ENCODE measurements at regions of chr7 and their contacts with region 1.

Region 1: GRCh38 chr7:34165929-34166550 is 260.7 kb downstream of the BMPER start:
- DNase-seq: peak; percentile 37
- H3K4me3 ChIP-seq: no peak overlapping the region
- H3K27ac ChIP-seq: no peak overlapping the region
- H3K4me1 ChIP-seq: no peaks in the 10 kb centered on the region
- H3K27me3 ChIP-seq: peaks cover 0 to 2% of the 10 kb centered on the region in 2 experiments
- CTCF ChIP-seq: peak; percentile 37 to 59
- POLR2A ChIP-seq: no peak

Region 2: DNA sequence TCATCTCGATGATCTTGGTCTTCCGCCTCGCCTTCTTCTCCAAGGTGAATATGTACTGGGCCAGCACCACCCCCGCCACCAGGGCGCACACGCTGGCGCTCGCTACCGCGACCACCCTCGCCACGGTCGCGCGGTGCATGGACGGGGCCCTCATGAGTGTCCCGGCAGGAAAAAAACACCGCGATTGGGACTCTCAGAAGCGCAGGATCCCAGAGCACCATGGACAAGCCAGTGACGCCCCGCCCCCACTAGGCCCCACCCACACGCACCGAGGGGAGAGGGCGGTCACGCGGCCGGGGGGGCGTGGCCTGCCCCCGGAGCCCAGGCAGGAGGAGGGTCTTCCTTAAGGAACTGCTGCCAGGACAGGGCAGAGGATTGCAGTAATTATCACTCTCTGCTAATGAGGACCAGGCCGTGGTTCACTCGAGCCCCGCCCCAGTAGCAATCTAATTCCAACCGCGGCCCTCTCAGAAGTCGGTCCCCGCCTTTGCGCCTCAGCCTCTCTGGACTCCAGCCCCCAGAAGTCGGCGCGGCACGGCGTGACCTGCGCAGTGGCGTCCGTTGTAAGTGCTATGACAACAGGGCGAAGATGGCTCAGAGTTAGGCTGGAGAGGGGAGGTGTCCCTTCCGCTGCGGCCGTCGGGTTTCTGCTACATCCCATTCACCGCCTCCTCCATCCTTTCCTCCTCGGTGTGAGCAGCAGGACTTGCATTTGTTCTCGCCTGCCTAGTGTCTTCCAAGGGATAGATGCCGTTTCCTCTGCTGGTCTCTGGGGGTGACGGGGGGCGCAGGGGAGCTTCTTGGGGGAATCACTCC is 1036.8 kb before region 1 on chr7 and contains the start of gene BBS9:
- CTCF ChIA-PET with region 1: no interaction called
- POLR2A ChIA-PET with region 1: no interaction called
- dilution Hi-C with region 1: no loop called
- intact Hi-C with region 1: no loop called
- DNase-seq: peak; percentile 96
- H3K4me3 ChIP-seq: peak within 1 kb of the TSS; percentile 48 to 85 (median 71)
- H3K27ac ChIP-seq: no peak within 1 kb of the TSS
- H3K4me1 ChIP-seq: peaks cover 8% of the 10 kb centered on the region
- H3K27me3 ChIP-seq: no peaks in the 10 kb centered on the region
- CTCF ChIP-seq: no peak
- POLR2A ChIP-seq: peak; percentile 64
- total RNA-seq, gene BBS9: 14.1 and 17.4 TPM in 2 replicates

Region 3: GRCh38 chr7:33562996-33563395 is 603.0 kb before region 1 on chr7:
- CTCF ChIA-PET with region 1: no interaction called
- POLR2A ChIA-PET with region 1: no interaction called
- dilution Hi-C with region 1: no loop called
- intact Hi-C with region 1: no loop called
- DNase-seq: no peak
- H3K4me3 ChIP-seq: no peak overlapping the region
- H3K27ac ChIP-seq: no peak overlapping the region
- H3K4me1 ChIP-seq: no peaks in the 10 kb centered on the region
- H3K27me3 ChIP-seq: no peaks in the 10 kb centered on the region
- CTCF ChIP-seq: no peak
- POLR2A ChIP-seq: no peak

Region 4: DNA sequence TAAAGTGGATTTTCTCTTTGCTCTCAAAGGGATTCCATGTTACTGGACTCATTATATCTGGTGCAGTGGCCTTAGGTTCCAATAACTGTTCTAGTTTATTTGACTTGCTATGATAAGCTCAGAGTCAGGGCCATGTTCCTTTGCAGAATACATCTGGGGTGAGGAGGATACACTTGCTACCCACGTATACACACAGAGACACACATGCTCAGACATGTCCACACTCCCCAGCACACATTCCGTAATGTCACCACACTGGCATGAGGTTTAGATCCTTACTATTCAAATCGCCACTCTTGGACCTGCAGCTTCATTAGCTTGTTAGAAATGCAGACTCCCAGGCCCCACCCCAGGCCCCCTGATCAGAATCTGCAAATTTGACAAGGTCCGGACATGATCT is 65.4 kb before region 1 on chr7:
- CTCF ChIA-PET with region 1: no interaction called
- POLR2A ChIA-PET with region 1: no interaction called
- dilution Hi-C with region 1: no loop called
- intact Hi-C with region 1: no loop called
- DNase-seq: no peak
- H3K4me3 ChIP-seq: no peak overlapping the region
- H3K27ac ChIP-seq: no peak overlapping the region
- H3K4me1 ChIP-seq: no peaks in the 10 kb centered on the region
- H3K27me3 ChIP-seq: no peaks in the 10 kb centered on the region
- CTCF ChIP-seq: no peak
- POLR2A ChIP-seq: no peak

Region 5: GRCh38 chr7:34222733-34223132 is 56.7 kb after region 1 on chr7:
- CTCF ChIA-PET with region 1: no interaction called
- POLR2A ChIA-PET with region 1: no interaction called
- dilution Hi-C with region 1: no loop called
- intact Hi-C with region 1: loop called (anchors 2 kb)
- DNase-seq: no peak
- H3K4me3 ChIP-seq: no peak overlapping the region
- H3K27ac ChIP-seq: no peak overlapping the region
- H3K4me1 ChIP-seq: no peaks in the 10 kb centered on the region
- H3K27me3 ChIP-seq: peaks cover 0 to 3% of the 10 kb centered on the region in 2 experiments
- CTCF ChIP-seq: no peak
- POLR2A ChIP-seq: no peak

Region 6: DNA sequence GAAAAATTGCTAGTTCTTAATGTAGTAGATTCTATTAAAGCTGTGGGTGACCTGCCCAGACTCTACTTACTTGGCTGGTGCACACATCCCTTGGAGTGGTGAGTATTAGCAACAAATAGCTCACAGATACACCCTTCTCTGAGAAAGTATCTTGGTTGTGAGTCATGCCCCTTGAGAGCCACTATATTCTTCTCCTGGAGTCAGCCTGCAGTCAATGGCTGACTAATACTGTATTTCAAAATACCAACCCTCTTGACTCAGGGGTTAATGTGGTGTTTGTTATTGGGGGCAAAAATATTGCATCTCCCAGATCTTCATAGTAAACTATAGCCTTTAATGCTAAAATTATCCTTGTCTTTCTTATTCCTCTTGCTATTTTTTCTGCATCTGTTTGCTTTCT is 94.2 kb after region 1 on chr7:
- CTCF ChIA-PET with region 1: no interaction called
- POLR2A ChIA-PET with region 1: no interaction called
- dilution Hi-C with region 1: no loop called
- intact Hi-C with region 1: no loop called
- DNase-seq: peak; percentile 57
- H3K4me3 ChIP-seq: no peak overlapping the region
- H3K27ac ChIP-seq: no peak overlapping the region
- H3K4me1 ChIP-seq: peaks cover 4% of the 10 kb centered on the region
- H3K27me3 ChIP-seq: no peaks in the 10 kb centered on the region
- CTCF ChIP-seq: no peak
- POLR2A ChIP-seq: no peak